ENCODE measurements at regions of chr12 and their contacts with region 1.

Region 1: GRCh38 chr12:98154850-98155249 is 360.5 kb upstream of the TMPO start:
- DNase-seq: peak; percentile 68 to 69
- H3K4me3 ChIP-seq: no peak overlapping the region
- H3K4me3 Mint-ChIP-seq: no peak overlapping the region
- H3K27ac Mint-ChIP-seq: no peak overlapping the region
- H3K4me1 ChIP-seq: peaks cover 12% of the 10 kb centered on the region
- H3K4me1 Mint-ChIP-seq: peaks cover 28% of the 10 kb centered on the region
- H3K27me3 ChIP-seq: no peaks in the 10 kb centered on the region
- H3K27me3 Mint-ChIP-seq: no peaks in the 10 kb centered on the region
- CTCF ChIP-seq: peak; percentile 46 to 67

Region 2: DNA sequence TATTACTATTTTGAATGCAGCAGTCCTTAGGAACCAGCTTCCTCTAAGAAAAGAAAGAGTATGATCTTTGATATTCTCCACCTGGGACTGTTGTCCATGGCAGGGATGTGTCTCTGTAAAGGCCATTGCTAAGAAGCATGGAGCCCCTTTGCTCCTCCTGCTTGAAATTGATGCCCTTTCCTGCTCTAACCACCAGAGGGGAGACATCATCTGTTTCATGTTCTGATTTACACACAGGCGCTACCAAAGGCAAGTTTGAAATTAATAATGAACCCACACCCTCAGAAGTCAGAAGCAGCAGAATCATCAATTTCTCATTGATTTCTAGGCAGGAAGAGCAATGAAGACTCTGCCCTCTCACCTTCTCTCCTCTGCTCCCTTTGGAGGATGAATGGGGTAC is 438.5 kb before region 1 on chr12:
- CTCF ChIA-PET with region 1: interaction called, 3 read pairs
- POLR2A ChIA-PET with region 1: no interaction called
- intact Hi-C with region 1: loop called (anchors 5 kb)
- DNase-seq: peak; percentile 33 to 38
- H3K4me3 ChIP-seq: no peak overlapping the region
- H3K4me3 Mint-ChIP-seq: no peak overlapping the region
- H3K27ac Mint-ChIP-seq: no peak overlapping the region
- H3K4me1 ChIP-seq: peaks cover 18% of the 10 kb centered on the region
- H3K4me1 Mint-ChIP-seq: peaks cover 21% of the 10 kb centered on the region
- H3K27me3 ChIP-seq: no peaks in the 10 kb centered on the region
- H3K27me3 Mint-ChIP-seq: no peaks in the 10 kb centered on the region
- CTCF ChIP-seq: peak; percentile 47 to 61

Region 3: DNA sequence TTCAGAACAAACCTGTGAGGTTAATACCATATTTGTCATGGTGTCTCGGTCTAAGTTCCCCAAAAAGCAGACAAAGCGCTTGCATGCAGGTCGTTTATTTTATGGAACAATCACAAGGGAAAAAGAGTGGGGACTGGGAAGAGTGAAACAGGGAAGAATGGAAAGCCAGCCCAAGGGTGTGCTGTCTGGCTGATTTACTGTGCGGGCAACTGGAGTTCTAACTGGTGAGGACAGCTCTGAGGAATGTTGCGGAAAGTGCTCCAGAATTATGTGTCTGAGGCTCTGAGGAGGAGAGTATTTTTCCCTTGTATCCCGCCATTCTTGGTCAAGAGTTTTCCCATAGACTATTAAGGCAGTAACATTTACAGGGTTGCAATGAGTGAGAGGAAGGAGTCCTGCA is 226.9 kb before region 1 on chr12:
- CTCF ChIA-PET with region 1: no interaction called
- POLR2A ChIA-PET with region 1: no interaction called
- intact Hi-C with region 1: no loop called
- DNase-seq: no peak
- H3K4me3 ChIP-seq: no peak overlapping the region
- H3K4me3 Mint-ChIP-seq: no peak overlapping the region
- H3K27ac Mint-ChIP-seq: no peak overlapping the region
- H3K4me1 ChIP-seq: no peaks in the 10 kb centered on the region
- H3K4me1 Mint-ChIP-seq: no peaks in the 10 kb centered on the region
- H3K27me3 ChIP-seq: no peaks in the 10 kb centered on the region
- H3K27me3 Mint-ChIP-seq: no peaks in the 10 kb centered on the region
- CTCF ChIP-seq: no peak

Region 4: GRCh38 chr12:97960754-97961608 is 193.9 kb before region 1 on chr12:
- CTCF ChIA-PET with region 1: no interaction called
- POLR2A ChIA-PET with region 1: no interaction called
- intact Hi-C with region 1: loop called (anchors 10 kb)
- DNase-seq: peak in 1 of 2 experiments; percentile 43
- H3K4me3 ChIP-seq: no peak overlapping the region
- H3K4me3 Mint-ChIP-seq: no peak overlapping the region
- H3K27ac Mint-ChIP-seq: no peak overlapping the region
- H3K4me1 ChIP-seq: no peaks in the 10 kb centered on the region
- H3K4me1 Mint-ChIP-seq: no peaks in the 10 kb centered on the region
- H3K27me3 ChIP-seq: no peaks in the 10 kb centered on the region
- H3K27me3 Mint-ChIP-seq: no peaks in the 10 kb centered on the region
- CTCF ChIP-seq: peak; percentile 54 to 72

Region 5: GRCh38 chr12:98002712-98003493 is 151.9 kb before region 1 on chr12:
- CTCF ChIA-PET with region 1: no interaction called
- POLR2A ChIA-PET with region 1: no interaction called
- intact Hi-C with region 1: loop called (anchors 1 kb)
- DNase-seq: peak; percentile 54 to 67
- H3K4me3 ChIP-seq: no peak overlapping the region
- H3K4me3 Mint-ChIP-seq: no peak overlapping the region
- H3K27ac Mint-ChIP-seq: no peak overlapping the region
- H3K4me1 ChIP-seq: no peaks in the 10 kb centered on the region
- H3K4me1 Mint-ChIP-seq: no peaks in the 10 kb centered on the region
- H3K27me3 ChIP-seq: no peaks in the 10 kb centered on the region
- H3K27me3 Mint-ChIP-seq: no peaks in the 10 kb centered on the region
- CTCF ChIP-seq: peak; percentile 61 to 72

Region 6: GRCh38 chr12:98022961-98023360 is 131.9 kb before region 1 on chr12:
- CTCF ChIA-PET with region 1: no interaction called
- POLR2A ChIA-PET with region 1: no interaction called
- intact Hi-C with region 1: no loop called
- DNase-seq: no peak
- H3K4me3 ChIP-seq: no peak overlapping the region
- H3K4me3 Mint-ChIP-seq: no peak overlapping the region
- H3K27ac Mint-ChIP-seq: no peak overlapping the region
- H3K4me1 ChIP-seq: peaks cover 9% of the 10 kb centered on the region
- H3K4me1 Mint-ChIP-seq: peaks cover 6% of the 10 kb centered on the region
- H3K27me3 ChIP-seq: no peaks in the 10 kb centered on the region
- H3K27me3 Mint-ChIP-seq: no peaks in the 10 kb centered on the region
- CTCF ChIP-seq: no peak

Region 7: GRCh38 chr12:98085050-98085755 is 69.6 kb before region 1 on chr12:
- CTCF ChIA-PET with region 1: no interaction called
- POLR2A ChIA-PET with region 1: no interaction called
- intact Hi-C with region 1: loop called (anchors 2 kb)
- DNase-seq: peak in 1 of 2 experiments; percentile 54
- H3K4me3 ChIP-seq: no peak overlapping the region
- H3K4me3 Mint-ChIP-seq: no peak overlapping the region
- H3K27ac Mint-ChIP-seq: peak overlapping the region; percentile 79
- H3K4me1 ChIP-seq: peaks cover 34% of the 10 kb centered on the region
- H3K4me1 Mint-ChIP-seq: peaks cover 32% of the 10 kb centered on the region
- H3K27me3 ChIP-seq: no peaks in the 10 kb centered on the region
- H3K27me3 Mint-ChIP-seq: no peaks in the 10 kb centered on the region
- CTCF ChIP-seq: no peak

Region 8: GRCh38 chr12:98109266-98109665 is 45.6 kb before region 1 on chr12:
- CTCF ChIA-PET with region 1: no interaction called
- POLR2A ChIA-PET with region 1: no interaction called
- intact Hi-C with region 1: no loop called
- DNase-seq: no peak
- H3K4me3 ChIP-seq: no peak overlapping the region
- H3K4me3 Mint-ChIP-seq: no peak overlapping the region
- H3K27ac Mint-ChIP-seq: no peak overlapping the region
- H3K4me1 ChIP-seq: no peaks in the 10 kb centered on the region
- H3K4me1 Mint-ChIP-seq: peaks cover 7% of the 10 kb centered on the region
- H3K27me3 ChIP-seq: no peaks in the 10 kb centered on the region
- H3K27me3 Mint-ChIP-seq: no peaks in the 10 kb centered on the region
- CTCF ChIP-seq: no peak

Region 9: DNA sequence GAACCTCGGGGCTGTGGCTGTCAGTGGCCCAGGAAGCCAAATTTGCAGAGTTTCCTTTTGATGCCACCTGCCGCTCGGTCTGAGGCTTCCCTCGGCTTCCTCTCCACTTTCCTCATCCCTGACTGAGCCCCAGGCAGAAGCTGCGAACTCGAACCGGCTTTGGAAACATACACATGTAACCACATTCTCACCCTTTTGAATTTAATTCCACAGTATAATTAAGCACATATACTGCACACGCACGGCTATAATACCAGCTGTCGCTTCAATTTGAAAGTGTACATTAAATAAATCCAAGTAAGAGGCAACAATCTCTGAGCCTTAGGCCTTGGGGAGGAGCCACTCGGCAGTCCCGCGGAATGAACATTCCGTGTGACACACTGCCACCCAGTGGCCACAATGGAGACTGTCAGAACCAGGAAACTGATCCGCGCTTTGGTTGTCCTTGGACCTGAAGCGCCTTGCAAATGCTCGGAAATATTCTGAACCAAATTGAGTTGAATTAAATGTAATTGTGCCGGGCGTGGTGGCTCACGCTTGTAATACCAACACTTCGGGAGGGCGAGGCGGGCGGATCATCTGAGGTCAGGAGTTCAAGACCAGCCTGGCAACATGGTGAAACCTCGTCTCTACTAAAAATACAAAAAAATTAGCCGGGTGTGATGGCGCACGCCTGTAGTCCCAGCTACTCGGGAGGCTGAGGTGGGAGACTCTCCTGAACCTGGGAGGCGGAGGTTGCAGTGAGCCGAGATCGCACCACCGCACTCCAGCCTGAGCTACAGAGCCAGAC is 242.7 kb after region 1 on chr12:
- CTCF ChIA-PET with region 1: no interaction called
- POLR2A ChIA-PET with region 1: no interaction called
- intact Hi-C with region 1: loop called (anchors 2 kb)
- DNase-seq: peak; percentile 70 to 79
- H3K4me3 ChIP-seq: no peak overlapping the region
- H3K4me3 Mint-ChIP-seq: peak overlapping the region; percentile 66
- H3K27ac Mint-ChIP-seq: peak overlapping the region; percentile 65
- H3K4me1 ChIP-seq: peaks cover 36% of the 10 kb centered on the region
- H3K4me1 Mint-ChIP-seq: peaks cover 16% of the 10 kb centered on the region
- H3K27me3 ChIP-seq: no peaks in the 10 kb centered on the region
- H3K27me3 Mint-ChIP-seq: no peaks in the 10 kb centered on the region
- CTCF ChIP-seq: peak; percentile 74 to 82

Measured in Caco-2 (cell line).